CD8-positive, alpha-beta T cell (primary cell): ENCODE measurements at regions of chr6 and their contacts with region 1.

Region 1: DNA sequence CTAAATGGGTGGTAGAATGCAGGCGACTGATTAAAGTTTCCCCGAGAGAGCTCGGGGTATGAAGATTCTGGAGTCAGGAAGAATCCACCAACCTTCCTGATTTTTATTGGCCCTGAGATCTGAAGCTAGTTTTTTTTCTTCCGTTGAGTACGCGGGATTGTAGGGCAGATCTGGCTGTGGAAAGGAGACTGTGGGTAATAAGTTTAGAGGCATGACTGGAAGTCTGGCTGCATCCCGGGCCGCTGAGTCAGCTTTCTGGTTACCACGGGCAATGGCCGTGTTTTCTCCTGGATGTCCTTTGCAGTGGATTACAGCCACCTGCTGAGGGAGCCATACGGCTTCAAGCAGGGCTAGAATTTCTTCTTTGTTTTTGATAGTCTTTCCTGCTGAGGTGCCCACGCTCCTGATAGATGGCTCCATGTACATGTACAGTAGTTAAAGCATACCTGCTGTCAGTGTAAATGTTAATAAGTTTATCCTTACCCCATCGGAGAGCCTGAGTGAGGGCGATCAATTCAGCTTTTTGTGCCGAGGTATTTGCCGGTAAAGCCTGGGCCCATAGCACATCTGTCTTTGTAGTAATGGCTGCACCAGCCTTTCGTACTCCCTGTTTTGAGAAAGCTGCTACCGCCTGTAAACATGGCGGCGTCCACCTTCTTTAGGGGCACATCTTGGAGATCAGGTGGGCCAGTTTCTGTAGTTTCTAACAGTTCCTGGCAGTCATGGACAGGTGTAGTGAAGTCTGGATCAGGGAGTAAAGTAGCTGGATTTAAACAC is 154.0 kb downstream of the TRIM27 start:
- DNase-seq: no peak
- ATAC-seq: no peak
- H3K4me3 ChIP-seq: no peak overlapping the region
- H3K4me3 Mint-ChIP-seq: no peak overlapping the region
- H3K27ac ChIP-seq: no peak overlapping the region
- H3K27ac Mint-ChIP-seq: no peak overlapping the region
- H3K4me1 ChIP-seq: no peaks in the 10 kb centered on the region
- H3K4me1 Mint-ChIP-seq: peaks cover 6% of the 10 kb centered on the region
- H3K27me3 ChIP-seq: peaks cover 40 to 60% of the 10 kb centered on the region in 2 experiments
- H3K27me3 Mint-ChIP-seq: peaks cover 97% of the 10 kb centered on the region
- CTCF ChIP-seq: no peak

Region 2: GRCh38 chr6:27948237-27948636 is 821.6 kb before region 1 on chr6:
- CTCF ChIA-PET with region 1: no interaction called
- POLR2A ChIA-PET with region 1: no interaction called
- intact Hi-C with region 1: loop called in 1 of 2 experiments (anchors 5 kb)
- DNase-seq: no peak
- ATAC-seq: no peak
- H3K4me3 ChIP-seq: no peak overlapping the region
- H3K4me3 Mint-ChIP-seq: no peak overlapping the region
- H3K27ac ChIP-seq: no peak overlapping the region
- H3K27ac Mint-ChIP-seq: no peak overlapping the region
- H3K4me1 ChIP-seq: no peaks in the 10 kb centered on the region
- H3K4me1 Mint-ChIP-seq: no peaks in the 10 kb centered on the region
- H3K27me3 ChIP-seq: no peaks in the 10 kb centered on the region
- H3K27me3 Mint-ChIP-seq: peaks cover 35% of the 10 kb centered on the region
- CTCF ChIP-seq: no peak

Region 3: DNA sequence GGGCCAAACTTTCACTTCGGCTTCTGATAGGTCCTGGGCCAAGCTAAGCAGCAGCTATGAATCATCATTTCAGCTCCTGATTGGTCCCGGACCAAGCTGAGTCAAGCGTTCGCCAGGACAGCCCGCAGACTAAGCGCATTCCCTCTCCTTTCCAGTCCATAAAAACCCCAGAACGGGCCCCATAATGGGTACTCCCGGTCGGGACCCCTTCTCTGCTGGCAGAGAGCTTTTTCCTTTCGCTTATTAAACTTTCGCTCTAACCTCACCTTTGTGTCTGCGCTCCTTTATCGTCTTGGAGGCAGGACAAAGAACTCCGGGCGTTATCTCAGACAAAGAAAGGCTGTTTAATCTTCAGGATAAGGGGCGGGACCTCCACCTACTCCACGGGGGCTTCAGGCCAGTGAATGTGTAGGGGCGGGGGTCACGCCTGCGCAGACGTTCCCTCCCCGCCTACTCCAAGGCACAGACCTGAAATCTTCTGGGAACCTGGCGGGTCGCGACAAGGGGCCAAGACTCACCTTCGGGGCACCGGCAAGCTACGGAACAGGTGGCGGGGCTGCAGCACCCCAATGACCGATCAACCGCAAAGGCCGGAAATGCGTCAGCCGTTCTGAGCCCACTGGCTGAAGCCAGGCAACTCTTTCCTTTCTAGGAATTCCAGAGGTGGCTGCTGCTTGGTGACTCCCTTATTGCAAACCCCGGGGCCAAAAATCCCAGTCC is 434.1 kb before region 1 on chr6 and contains the start of gene ZSCAN31:
- CTCF ChIA-PET with region 1: no interaction called
- POLR2A ChIA-PET with region 1: no interaction called
- intact Hi-C with region 1: no loop called
- DNase-seq: peak; percentile 64 to 94 (median 80)
- ATAC-seq: peak; percentile 86
- H3K4me3 ChIP-seq: peak within 1 kb of the TSS; percentile 77 to 85
- H3K4me3 Mint-ChIP-seq: no peak within 1 kb of the TSS
- H3K27ac ChIP-seq: peak within 1 kb of the TSS; percentile 94 to 96
- H3K27ac Mint-ChIP-seq: no peak within 1 kb of the TSS
- H3K4me1 ChIP-seq: peaks cover 15% of the 10 kb centered on the region
- H3K4me1 Mint-ChIP-seq: peaks cover 9% of the 10 kb centered on the region
- H3K27me3 ChIP-seq: no peaks in the 10 kb centered on the region
- H3K27me3 Mint-ChIP-seq: no peaks in the 10 kb centered on the region
- CTCF ChIP-seq: no peak
- total RNA-seq, gene ZSCAN31: 1.4 to 1.9 TPM

Region 4: DNA sequence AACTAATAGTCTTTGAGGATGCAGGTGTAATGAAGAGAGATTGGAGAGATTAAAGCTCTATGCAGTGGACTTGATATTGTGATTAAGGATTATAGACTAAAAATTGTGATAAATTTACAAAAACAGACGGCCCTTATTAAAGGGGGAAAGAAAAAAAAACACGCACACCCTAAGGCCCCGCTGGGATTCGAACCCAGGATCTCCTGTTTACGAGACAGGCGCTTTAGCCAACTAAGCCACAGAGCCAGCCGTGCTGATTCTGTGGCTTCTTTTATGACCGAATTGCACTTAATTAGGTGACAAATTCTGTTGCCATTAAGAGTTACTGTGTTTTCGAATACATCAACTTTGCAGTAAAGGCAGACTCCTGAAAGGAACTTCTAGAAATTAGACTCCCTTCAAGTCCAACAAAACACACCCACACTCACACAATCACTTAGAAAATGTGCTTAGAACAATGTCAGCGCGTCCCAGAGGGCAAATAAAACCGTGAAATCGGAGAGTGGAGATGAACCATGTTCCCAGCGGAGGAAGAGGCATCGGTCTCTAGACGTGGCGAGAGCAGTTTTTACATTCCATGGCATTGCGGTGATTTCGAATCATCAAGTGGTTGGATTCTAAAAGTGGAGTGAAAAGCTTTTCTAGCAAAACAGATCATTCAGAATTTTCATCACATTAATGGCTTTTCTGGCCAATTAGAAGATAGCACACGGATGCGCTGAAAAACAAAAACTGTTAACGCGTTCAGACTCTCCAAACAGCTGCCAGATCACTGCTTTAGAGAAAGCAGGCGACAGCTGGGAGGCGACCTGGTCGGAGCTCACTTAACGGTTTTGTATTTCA is 121.6 kb before region 1 on chr6:
- CTCF ChIA-PET with region 1: no interaction called
- POLR2A ChIA-PET with region 1: no interaction called
- intact Hi-C with region 1: no loop called
- DNase-seq: peak in 4 of 9 experiments; percentile 8 to 45 (median 29)
- ATAC-seq: no peak
- H3K4me3 ChIP-seq: peak overlapping the region in 1 of 2 experiments; percentile 1
- H3K4me3 Mint-ChIP-seq: peak overlapping the region; percentile 77
- H3K27ac ChIP-seq: no peak overlapping the region
- H3K27ac Mint-ChIP-seq: no peak overlapping the region
- H3K4me1 ChIP-seq: peaks cover 12% of the 10 kb centered on the region
- H3K4me1 Mint-ChIP-seq: peaks cover 14% of the 10 kb centered on the region
- H3K27me3 ChIP-seq: peaks cover 0 to 3% of the 10 kb centered on the region in 2 experiments
- H3K27me3 Mint-ChIP-seq: peaks cover 58% of the 10 kb centered on the region
- CTCF ChIP-seq: no peak

Region 5: GRCh38 chr6:28794175-28795002 is 24.6 kb after region 1 on chr6:
- CTCF ChIA-PET with region 1: no interaction called
- POLR2A ChIA-PET with region 1: no interaction called
- intact Hi-C with region 1: no loop called
- DNase-seq: no peak
- ATAC-seq: no peak
- H3K4me3 ChIP-seq: no peak overlapping the region
- H3K4me3 Mint-ChIP-seq: no peak overlapping the region
- H3K27ac ChIP-seq: no peak overlapping the region
- H3K27ac Mint-ChIP-seq: no peak overlapping the region
- H3K4me1 ChIP-seq: no peaks in the 10 kb centered on the region
- H3K4me1 Mint-ChIP-seq: peaks cover 9% of the 10 kb centered on the region
- H3K27me3 ChIP-seq: peaks cover 17 to 38% of the 10 kb centered on the region in 2 experiments
- H3K27me3 Mint-ChIP-seq: peaks cover 86% of the 10 kb centered on the region
- CTCF ChIP-seq: no peak